Right ventricle myocardium inferior (tissue), 1 donor: ENCODE measurements at regions of chr11 and their contacts with region 1.

Region 1: GRCh38 chr11:124961972-124962609 is 8.1 kb downstream of the CCDC15 start:
- DNase-seq: no peak
- ATAC-seq: peak; percentile 75

Region 2: DNA sequence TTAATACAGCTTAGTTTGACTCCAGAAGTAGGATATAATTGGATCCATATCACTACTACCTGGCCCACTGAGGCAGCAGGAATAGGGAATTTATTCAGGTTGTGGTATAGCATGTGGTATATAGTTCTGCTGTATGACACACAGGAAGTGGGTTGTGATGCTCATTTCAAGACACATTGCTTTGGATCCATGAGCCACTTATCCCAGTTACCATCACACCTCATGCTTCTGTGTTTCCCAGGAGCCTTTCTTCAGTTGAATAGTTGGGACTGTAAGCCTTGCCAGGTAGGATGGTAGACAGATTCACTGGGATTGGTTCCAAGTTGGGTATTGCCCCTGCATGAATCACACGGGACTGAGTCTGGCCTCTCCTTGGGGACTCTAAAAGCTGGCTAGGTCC is 91.1 kb after region 1 on chr11:
- intact Hi-C with region 1: no loop called
- DNase-seq: no peak
- ATAC-seq: no peak

Region 3: DNA sequence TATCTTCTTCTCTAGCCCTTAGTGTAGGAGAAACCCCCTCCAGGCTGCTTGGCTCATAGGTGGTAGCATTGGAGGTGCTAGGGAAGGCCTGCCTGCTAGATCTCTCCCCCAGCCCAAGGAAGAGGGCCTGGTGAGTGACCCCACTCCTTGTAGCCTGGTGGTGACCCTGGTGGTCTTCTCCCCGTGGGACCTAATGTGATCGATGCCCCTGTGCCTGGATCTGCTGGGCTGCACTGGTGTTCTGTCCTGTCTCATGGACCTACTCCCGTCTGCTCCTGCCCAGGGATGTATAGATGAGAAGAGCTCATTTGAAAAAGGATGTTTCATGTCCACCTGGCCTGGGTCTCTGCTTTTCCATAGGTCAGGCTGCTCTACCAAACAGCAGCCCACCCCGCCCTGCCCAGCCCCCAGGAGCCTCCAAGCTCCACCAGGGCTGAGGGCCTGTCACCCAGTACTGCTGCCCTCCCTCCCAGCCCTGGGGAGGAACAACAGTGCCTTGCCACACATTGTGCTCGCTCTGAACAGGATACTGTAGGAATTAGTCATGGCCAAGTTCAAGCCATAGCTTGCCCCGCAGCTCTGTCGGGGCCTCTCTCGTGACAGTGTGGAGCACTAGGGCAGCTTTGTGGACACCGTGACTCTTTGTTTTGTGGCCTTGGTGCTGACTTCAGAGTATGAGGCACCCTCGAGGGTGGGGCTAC is 120.7 kb after region 1 on chr11:
- intact Hi-C with region 1: no loop called
- DNase-seq: no peak
- ATAC-seq: no peak

Region 4: GRCh38 chr11:125141686-125142535 is 179.8 kb after region 1 on chr11:
- intact Hi-C with region 1: loop called (anchors 5 kb)
- DNase-seq: no peak
- ATAC-seq: peak; percentile 57

Region 5: GRCh38 chr11:125874556-125875124 is 912.5 kb after region 1 on chr11:
- intact Hi-C with region 1: loop called (anchors 5 kb)
- DNase-seq: no peak
- ATAC-seq: peak; percentile 96